Natural killer cell (primary cell): ENCODE measurements at regions of chr2 and their contacts with region 1.

Region 1: DNA sequence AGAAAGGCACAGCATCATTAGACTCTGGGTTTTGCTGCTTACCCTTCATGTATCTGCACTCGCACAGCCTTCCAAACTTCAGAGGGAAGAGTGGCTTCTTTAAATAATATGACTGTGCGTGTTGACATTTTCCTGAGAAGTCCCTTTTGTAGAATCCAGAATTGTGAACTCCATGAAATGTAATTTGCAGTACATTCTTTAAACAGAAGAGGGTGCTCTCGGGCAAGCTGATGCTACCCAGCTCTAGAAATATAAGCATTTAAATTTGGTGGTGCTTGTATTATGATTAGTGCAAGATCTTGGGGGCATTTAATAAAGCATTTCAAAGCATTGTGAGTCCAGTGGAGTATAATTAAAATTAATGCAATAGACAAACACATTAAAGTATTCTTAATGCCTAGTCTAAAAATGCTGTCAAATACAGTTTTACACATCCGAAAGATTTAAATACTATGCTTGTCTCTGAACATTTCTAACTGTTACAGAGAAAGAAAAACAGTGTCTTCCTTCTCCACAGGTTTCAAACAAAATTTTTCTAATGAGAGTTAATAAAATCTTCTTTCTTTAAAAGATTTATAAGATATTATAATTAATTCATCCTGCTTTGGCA is 17.3 kb upstream of the GTF2A1L start:
- DNase-seq: peak in 1 of 2 donors; percentile 27
- ATAC-seq: no peak
- H3K4me3 ChIP-seq: no peak overlapping the region
- H3K4me3 Mint-ChIP-seq: no peak overlapping the region
- H3K27ac ChIP-seq: no peak overlapping the region
- H3K27ac Mint-ChIP-seq: no peak overlapping the region
- H3K4me1 ChIP-seq: no peaks in the 10 kb centered on the region
- H3K4me1 Mint-ChIP-seq: no peaks in the 10 kb centered on the region
- H3K27me3 ChIP-seq: peaks cover 3% of the 10 kb centered on the region
- H3K27me3 Mint-ChIP-seq: peaks cover 7% of the 10 kb centered on the region in 2 donors
- CTCF ChIP-seq: peak; percentile 59

Region 2: DNA sequence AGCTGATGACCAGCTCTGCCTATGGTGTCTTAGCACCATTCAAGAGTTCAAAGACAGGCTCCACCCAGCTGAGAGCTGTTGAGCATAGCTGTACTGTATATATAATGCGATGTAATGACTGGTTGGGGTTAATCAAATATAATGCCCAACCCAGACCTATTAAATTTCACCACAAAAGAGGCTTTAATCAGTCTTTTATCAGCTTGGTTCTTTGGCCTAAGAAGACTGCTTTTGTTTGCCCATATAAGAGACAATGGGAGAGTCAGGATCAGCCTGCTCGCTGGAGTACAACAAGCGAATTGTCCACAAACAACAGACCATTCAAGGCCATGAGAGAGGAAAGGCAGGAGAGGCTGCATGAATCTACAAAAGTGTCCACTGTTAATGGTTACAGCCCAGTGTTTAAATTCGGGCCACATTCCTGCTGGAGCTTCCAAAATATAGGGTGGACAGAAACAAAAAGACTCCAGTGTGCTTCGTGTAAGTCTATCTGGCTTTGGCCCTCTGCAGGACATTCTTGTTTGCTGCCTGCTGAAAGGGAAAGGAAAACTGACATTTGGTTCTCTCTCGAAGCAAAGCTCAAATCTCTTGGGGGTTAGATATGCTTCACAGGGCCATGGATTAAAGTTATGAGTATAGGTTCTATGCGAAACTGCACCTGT is 395.0 kb before region 1 on chr2:
- intact Hi-C with region 1: no loop called
- DNase-seq: no peak
- ATAC-seq: no peak
- H3K4me3 ChIP-seq: no peak overlapping the region
- H3K4me3 Mint-ChIP-seq: no peak overlapping the region
- H3K27ac ChIP-seq: no peak overlapping the region
- H3K27ac Mint-ChIP-seq: no peak overlapping the region
- H3K4me1 ChIP-seq: no peaks in the 10 kb centered on the region
- H3K4me1 Mint-ChIP-seq: no peaks in the 10 kb centered on the region
- H3K27me3 ChIP-seq: no peaks in the 10 kb centered on the region
- H3K27me3 Mint-ChIP-seq: no peaks in the 10 kb centered on the region
- CTCF ChIP-seq: no peak

Region 3: DNA sequence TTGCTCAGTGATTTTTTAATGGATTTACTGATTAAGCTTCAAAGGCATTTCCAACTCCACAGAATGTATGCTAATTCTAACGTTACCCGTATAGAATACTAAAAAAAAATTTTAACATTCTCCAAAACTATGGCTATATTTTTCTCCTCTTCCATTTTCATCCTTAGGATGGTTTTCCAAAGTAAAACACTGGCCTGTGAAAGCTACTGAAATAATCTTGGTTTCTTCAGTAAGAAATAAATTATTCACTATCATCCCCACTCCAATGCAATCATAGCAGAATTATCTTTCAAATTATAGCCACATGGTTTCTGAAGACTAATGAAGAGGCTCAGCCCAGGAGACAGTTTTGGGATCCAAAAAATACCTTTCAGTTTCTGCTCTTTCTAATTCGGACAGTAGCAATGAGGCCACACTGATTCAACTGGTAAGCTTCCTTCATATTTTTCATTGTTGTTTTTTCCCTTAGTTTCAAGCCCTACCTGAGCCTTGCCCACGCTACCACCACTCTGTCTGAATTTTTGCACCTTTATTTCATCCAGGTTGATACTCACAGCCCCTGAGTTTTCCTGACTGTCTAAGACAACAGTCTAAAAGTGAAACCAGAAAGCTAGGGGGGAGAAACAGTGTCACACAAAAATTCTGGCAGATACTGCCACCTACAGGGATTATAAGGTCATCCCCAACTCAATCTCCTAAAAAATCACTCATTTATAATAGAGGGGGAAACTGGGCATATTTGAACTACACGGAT is 1543.7 kb after region 1 on chr2:
- intact Hi-C with region 1: loop called (anchors 10 kb)
- DNase-seq: peak in 1 of 2 donors; percentile 14
- ATAC-seq: peak in 2 of 3 donors; percentile 46 to 71
- H3K4me3 ChIP-seq: no peak overlapping the region
- H3K4me3 Mint-ChIP-seq: peak overlapping the region; percentile 65
- H3K27ac ChIP-seq: peak overlapping the region; percentile 25
- H3K27ac Mint-ChIP-seq: peak overlapping the region; percentile 15 to 80
- H3K4me1 ChIP-seq: no peaks in the 10 kb centered on the region
- H3K4me1 Mint-ChIP-seq: peaks cover 5 to 10% of the 10 kb centered on the region in 2 donors
- H3K27me3 ChIP-seq: no peaks in the 10 kb centered on the region
- H3K27me3 Mint-ChIP-seq: no peaks in the 10 kb centered on the region
- CTCF ChIP-seq: peak; percentile 17

Region 4: DNA sequence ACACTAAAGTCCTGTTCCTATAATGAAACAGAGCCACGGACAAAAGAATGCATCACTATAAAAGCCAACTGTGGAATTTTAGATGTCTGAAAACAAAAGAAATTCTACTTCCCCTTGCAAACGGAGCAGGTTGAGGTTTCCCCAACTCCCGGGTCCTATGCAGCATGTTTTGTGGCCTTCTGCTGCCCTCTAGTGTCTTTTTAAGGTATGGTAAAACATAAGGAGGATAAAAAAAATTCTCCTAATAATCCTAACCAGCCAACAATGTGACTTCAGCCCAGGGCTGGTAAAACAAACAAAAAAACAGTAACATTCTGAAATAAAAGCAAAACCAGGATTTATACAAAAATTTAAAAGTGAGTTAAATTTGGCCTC is 1892.2 kb after region 1 on chr2:
- intact Hi-C with region 1: loop called (anchors 5 kb)
- DNase-seq: peak in 1 of 2 donors; percentile 59
- ATAC-seq: peak; percentile 57 to 75 (median 58)
- H3K4me3 ChIP-seq: no peak overlapping the region
- H3K4me3 Mint-ChIP-seq: peak overlapping the region; percentile 49
- H3K27ac ChIP-seq: no peak overlapping the region
- H3K27ac Mint-ChIP-seq: no peak overlapping the region
- H3K4me1 ChIP-seq: peaks cover 10% of the 10 kb centered on the region
- H3K4me1 Mint-ChIP-seq: peaks cover 30 to 32% of the 10 kb centered on the region in 2 donors
- H3K27me3 ChIP-seq: no peaks in the 10 kb centered on the region
- H3K27me3 Mint-ChIP-seq: no peaks in the 10 kb centered on the region
- CTCF ChIP-seq: peak; percentile 51